ENCODE measurements at regions of chr7 and their contacts with region 1.

Region 1: DNA sequence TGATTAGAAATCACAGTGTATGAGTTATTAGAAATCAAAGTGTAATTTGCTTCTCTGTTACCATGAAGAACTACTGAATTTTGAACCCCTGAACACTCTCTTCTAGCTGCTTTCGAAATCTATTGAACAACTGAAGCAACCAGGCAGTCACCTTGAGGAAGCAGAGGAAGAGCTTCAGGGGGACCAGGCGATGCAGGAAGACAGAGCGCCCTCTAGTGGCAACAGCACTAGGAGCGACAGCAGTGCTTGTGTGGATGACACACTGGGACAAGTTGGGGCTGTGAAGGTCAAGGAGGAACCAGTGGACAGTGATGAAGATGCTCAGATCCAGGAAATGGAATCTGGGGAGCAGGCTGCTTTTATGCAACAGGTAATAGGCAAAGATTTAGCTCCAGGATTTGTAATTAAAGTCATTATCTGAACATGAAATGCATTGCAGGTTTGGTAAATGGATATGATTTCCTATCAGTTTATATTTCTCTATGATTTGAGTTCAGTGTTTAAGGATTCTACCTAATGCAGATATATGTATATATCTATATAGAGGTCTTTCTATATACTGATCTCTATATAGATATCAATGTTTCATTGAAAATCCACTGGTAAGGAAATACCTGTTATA is 170.7 kb downstream of the HDAC9 start:
- DNase-seq: peak; percentile 62
- H3K4me3 ChIP-seq: no peak overlapping the region
- H3K27ac ChIP-seq: no peak overlapping the region
- H3K4me1 ChIP-seq: peaks cover 28% of the 10 kb centered on the region
- H3K27me3 ChIP-seq: peaks cover 11 to 23% of the 10 kb centered on the region in 2 experiments
- CTCF ChIP-seq: peak; percentile 92 to 93
- POLR2A ChIP-seq: no peak

Region 2: GRCh38 chr7:18426564-18427226 is 239.5 kb before region 1 on chr7:
- CTCF ChIA-PET with region 1: interaction called, 3 read pairs
- POLR2A ChIA-PET with region 1: no interaction called
- dilution Hi-C with region 1: no loop called
- intact Hi-C with region 1: loop called (anchors 2 kb)
- DNase-seq: peak; percentile 95
- H3K4me3 ChIP-seq: no peak overlapping the region
- H3K27ac ChIP-seq: peak overlapping the region; percentile 70
- H3K4me1 ChIP-seq: peaks cover 29% of the 10 kb centered on the region
- H3K27me3 ChIP-seq: no peaks in the 10 kb centered on the region
- CTCF ChIP-seq: no peak
- POLR2A ChIP-seq: no peak

Region 3: GRCh38 chr7:18570890-18571478 is 95.2 kb before region 1 on chr7:
- CTCF ChIA-PET with region 1: interaction called, 9 read pairs
- POLR2A ChIA-PET with region 1: no interaction called
- dilution Hi-C with region 1: no loop called
- intact Hi-C with region 1: loop called (anchors 2 kb)
- DNase-seq: peak; percentile 72
- H3K4me3 ChIP-seq: no peak overlapping the region
- H3K27ac ChIP-seq: no peak overlapping the region
- H3K4me1 ChIP-seq: no peaks in the 10 kb centered on the region
- H3K27me3 ChIP-seq: no peaks in the 10 kb centered on the region
- CTCF ChIP-seq: peak; percentile 21 to 28
- POLR2A ChIP-seq: no peak

Region 4: GRCh38 chr7:18610331-18610948 is 55.8 kb before region 1 on chr7:
- CTCF ChIA-PET with region 1: interaction called, 5 read pairs
- POLR2A ChIA-PET with region 1: no interaction called
- dilution Hi-C with region 1: no loop called
- intact Hi-C with region 1: loop called (anchors 5 kb)
- DNase-seq: peak; percentile 38
- H3K4me3 ChIP-seq: no peak overlapping the region
- H3K27ac ChIP-seq: no peak overlapping the region
- H3K4me1 ChIP-seq: no peaks in the 10 kb centered on the region
- H3K27me3 ChIP-seq: no peaks in the 10 kb centered on the region
- CTCF ChIP-seq: peak; percentile 52 to 66
- POLR2A ChIP-seq: no peak

Region 5: GRCh38 chr7:18895456-18895855 is 229.2 kb after region 1 on chr7:
- CTCF ChIA-PET with region 1: interaction called, 5 read pairs
- POLR2A ChIA-PET with region 1: no interaction called
- dilution Hi-C with region 1: no loop called
- intact Hi-C with region 1: loop called (anchors 5 kb)
- DNase-seq: peak; percentile 75
- H3K4me3 ChIP-seq: no peak overlapping the region
- H3K27ac ChIP-seq: peak overlapping the region; percentile 65
- H3K4me1 ChIP-seq: peaks cover 14% of the 10 kb centered on the region
- H3K27me3 ChIP-seq: no peaks in the 10 kb centered on the region
- CTCF ChIP-seq: no peak
- POLR2A ChIP-seq: no peak

Region 6: GRCh38 chr7:19117091-19117869 is 451.1 kb after region 1 on chr7 and contains the start of gene TWIST1:
- CTCF ChIA-PET with region 1: interaction called, 4 read pairs
- POLR2A ChIA-PET with region 1: no interaction called
- dilution Hi-C with region 1: no loop called
- intact Hi-C with region 1: loop called (anchors 5 kb)
- DNase-seq: no peak
- H3K4me3 ChIP-seq: peak within 1 kb of the TSS in 2 of 3 experiments; percentile 22 to 37
- H3K27ac ChIP-seq: no peak within 1 kb of the TSS
- H3K4me1 ChIP-seq: peaks cover 13% of the 10 kb centered on the region
- H3K27me3 ChIP-seq: peaks cover 70 to 94% of the 10 kb centered on the region in 2 experiments
- CTCF ChIP-seq: no peak
- POLR2A ChIP-seq: no peak
- total RNA-seq, gene TWIST1: not detected in 2 replicates